Naive thymus-derived CD4-positive, alpha-beta T cell (primary cell): ENCODE measurements at regions of chr1 and their contacts with region 1.

Region 1: GRCh38 chr1:85200870-85201339 is at the start of gene SYDE2:
- DNase-seq: peak; percentile 72 to 91 (median 89)
- ATAC-seq: peak; percentile 90
- H3K4me3 ChIP-seq: peak within 1 kb of the TSS; percentile 84
- H3K4me3 Mint-ChIP-seq: peak within 1 kb of the TSS; percentile 86 to 100 (median 98)
- H3K27ac ChIP-seq: peak within 1 kb of the TSS; percentile 96
- H3K27ac Mint-ChIP-seq: peak within 1 kb of the TSS; percentile 88 to 100 (median 99)
- H3K4me1 ChIP-seq: peaks cover 7 to 11% of the 10 kb centered on the region in 2 donors
- H3K4me1 Mint-ChIP-seq: peaks cover 15 to 61% (median 53%) of the 10 kb centered on the region in 7 donors
- H3K27me3 ChIP-seq: no peaks in the 10 kb centered on the region
- H3K27me3 Mint-ChIP-seq: peaks cover 0 to 46% (median 0%) of the 10 kb centered on the region in 5 donors
- total RNA-seq, gene SYDE2: 1.2 to 9.1 (median 8.4) TPM

Region 2: GRCh38 chr1:84077476-84078107 is 1123.3 kb before region 1 on chr1:
- CTCF ChIA-PET with region 1: no interaction called
- POLR2A ChIA-PET with region 1: no interaction called
- intact Hi-C with region 1: loop called in 1 of 2 experiments (anchors 2 kb)
- DNase-seq: peak; percentile 64 to 79 (median 72)
- ATAC-seq: peak; percentile 97
- H3K4me3 ChIP-seq: peak overlapping the region; percentile 79
- H3K4me3 Mint-ChIP-seq: peak overlapping the region; percentile 84 to 93 (median 90)
- H3K27ac ChIP-seq: peak overlapping the region; percentile 66
- H3K27ac Mint-ChIP-seq: peak overlapping the region; percentile 23 to 87 (median 75)
- H3K4me1 ChIP-seq: peaks cover 9 to 10% of the 10 kb centered on the region in 2 donors
- H3K4me1 Mint-ChIP-seq: peaks cover 6 to 23% (median 14%) of the 10 kb centered on the region in 7 donors
- H3K27me3 ChIP-seq: no peaks in the 10 kb centered on the region
- H3K27me3 Mint-ChIP-seq: peaks cover 0 to 35% (median 0%) of the 10 kb centered on the region in 5 donors

Region 3: GRCh38 chr1:84506002-84506728 is 694.7 kb before region 1 on chr1 and contains the starts of genes GNG5 and SPATA1:
- CTCF ChIA-PET with region 1: no interaction called
- POLR2A ChIA-PET with region 1: no interaction called
- intact Hi-C with region 1: loop called (anchors 1 to 5 kb)
- DNase-seq: peak; percentile 94 to 98 (median 96)
- ATAC-seq: peak; percentile 95
- H3K4me3 ChIP-seq: peak within 1 kb of the TSS; percentile 94
- H3K4me3 Mint-ChIP-seq: peak within 1 kb of the TSS; percentile 94 to 100 (median 98)
- H3K27ac ChIP-seq: peak within 1 kb of the TSS; percentile 76
- H3K27ac Mint-ChIP-seq: peak within 1 kb of the TSS; percentile 93 to 99 (median 96)
- H3K4me1 ChIP-seq: peaks cover 15 to 27% of the 10 kb centered on the region in 2 donors
- H3K4me1 Mint-ChIP-seq: peaks cover 18 to 54% (median 50%) of the 10 kb centered on the region in 7 donors
- H3K27me3 ChIP-seq: no peaks in the 10 kb centered on the region
- H3K27me3 Mint-ChIP-seq: peaks cover 0 to 2% (median 0%) of the 10 kb centered on the region in 5 donors
- total RNA-seq, gene GNG5: 24.8 to 90.7 (median 28.9) TPM
- total RNA-seq, gene SPATA1: 1.7 to 3.6 (median 2.2) TPM in 4 of 5 experiments, not detected in the other

Region 4: GRCh38 chr1:85048296-85049064 is 152.4 kb before region 1 on chr1 and contains the start of gene MCOLN3:
- CTCF ChIA-PET with region 1: no interaction called
- POLR2A ChIA-PET with region 1: no interaction called
- intact Hi-C with region 1: loop called in 1 of 2 experiments (anchors 2 kb)
- DNase-seq: peak in 7 of 9 donors; percentile 9 to 56 (median 24)
- ATAC-seq: peak; percentile 67
- H3K4me3 ChIP-seq: peak within 1 kb of the TSS; percentile 38
- H3K4me3 Mint-ChIP-seq: peak within 1 kb of the TSS; percentile 70 to 86 (median 80)
- H3K27ac ChIP-seq: no peak within 1 kb of the TSS
- H3K27ac Mint-ChIP-seq: peak within 1 kb of the TSS in 1 of 9 donors; percentile 55
- H3K4me1 ChIP-seq: peaks cover 10 to 21% of the 10 kb centered on the region in 2 donors
- H3K4me1 Mint-ChIP-seq: peaks cover 7 to 35% (median 29%) of the 10 kb centered on the region in 7 donors
- H3K27me3 ChIP-seq: peaks cover 11 to 13% of the 10 kb centered on the region in 2 donors
- H3K27me3 Mint-ChIP-seq: peaks cover 47 to 60% (median 54%) of the 10 kb centered on the region in 5 donors
- total RNA-seq, gene MCOLN3: 0.77 to 11.1 (median 0.95) TPM

Region 5: GRCh38 chr1:85179522-85179921 is 21.4 kb before region 1 on chr1:
- CTCF ChIA-PET with region 1: interaction called, 3 read pairs
- POLR2A ChIA-PET with region 1: interaction called, 8 read pairs
- intact Hi-C with region 1: loop called in 1 of 2 experiments (anchors 1 kb)
- DNase-seq: peak in 7 of 9 donors; percentile 34 to 67 (median 61)
- ATAC-seq: peak; percentile 85
- H3K4me3 ChIP-seq: peak overlapping the region; percentile 7
- H3K4me3 Mint-ChIP-seq: peak overlapping the region; percentile 8 to 86 (median 70)
- H3K27ac ChIP-seq: peak overlapping the region; percentile 25
- H3K27ac Mint-ChIP-seq: peak overlapping the region; percentile 6 to 93 (median 55)
- H3K4me1 ChIP-seq: peaks cover 6 to 10% of the 10 kb centered on the region in 2 donors
- H3K4me1 Mint-ChIP-seq: peaks cover 10 to 24% (median 17%) of the 10 kb centered on the region in 7 donors
- H3K27me3 ChIP-seq: no peaks in the 10 kb centered on the region
- H3K27me3 Mint-ChIP-seq: no peaks in the 10 kb centered on the region

Region 6: GRCh38 chr1:85276215-85276977 is 75.5 kb after region 1 on chr1 and contains the start of gene BCL10:
- CTCF ChIA-PET with region 1: no interaction called
- POLR2A ChIA-PET with region 1: interaction called, 38 read pairs
- intact Hi-C with region 1: loop called (anchors 1 kb)
- DNase-seq: peak; percentile 95 to 98 (median 97)
- ATAC-seq: peak; percentile 97
- H3K4me3 ChIP-seq: peak within 1 kb of the TSS; percentile 89
- H3K4me3 Mint-ChIP-seq: peak within 1 kb of the TSS; percentile 82 to 95 (median 90)
- H3K27ac ChIP-seq: peak within 1 kb of the TSS; percentile 97
- H3K27ac Mint-ChIP-seq: peak within 1 kb of the TSS; percentile 84 to 97 (median 95)
- H3K4me1 ChIP-seq: peaks cover 17 to 28% of the 10 kb centered on the region in 2 donors
- H3K4me1 Mint-ChIP-seq: peaks cover 36 to 55% (median 47%) of the 10 kb centered on the region in 7 donors
- H3K27me3 ChIP-seq: no peaks in the 10 kb centered on the region
- H3K27me3 Mint-ChIP-seq: peaks cover 0 to 21% (median 0%) of the 10 kb centered on the region in 5 donors
- total RNA-seq, gene BCL10: 30.4 to 53.0 (median 35.4) TPM